ENCODE measurements at regions of chr6 and their contacts with region 1.

Region 1: GRCh38 chr6:34055223-34055933 is 90.5 kb downstream of the GRM4 start:
- DNase-seq: peak; percentile 82
- ATAC-seq: peak; percentile 57
- H3K4me3 Mint-ChIP-seq: no peak overlapping the region
- H3K27ac Mint-ChIP-seq: no peak overlapping the region
- H3K4me1 Mint-ChIP-seq: peaks cover 50% of the 10 kb centered on the region
- H3K27me3 Mint-ChIP-seq: no peaks in the 10 kb centered on the region; the same call in 1 of the 2 replicates
- CTCF ChIP-seq: peak; percentile 68

Region 2: DNA sequence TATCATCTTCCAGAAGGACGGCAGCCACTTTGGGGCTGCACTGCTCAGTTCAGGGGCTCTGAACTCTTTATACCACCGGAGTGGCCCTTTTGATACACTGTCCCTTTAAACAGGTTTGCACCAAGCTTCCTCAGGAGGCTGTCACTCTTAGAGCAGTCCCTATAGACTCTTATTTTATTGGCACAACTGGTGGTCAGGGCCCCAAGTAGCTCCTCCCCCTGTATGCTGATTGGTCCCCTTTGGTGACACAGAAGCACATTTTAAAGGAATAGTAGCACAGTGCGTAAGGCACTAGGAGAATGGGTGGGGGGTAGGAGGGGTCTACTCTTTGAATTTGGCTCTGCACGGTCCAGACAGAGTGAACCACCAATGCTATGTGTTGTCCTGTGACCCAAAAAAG is 128.9 kb before region 1 on chr6:
- CTCF ChIA-PET with region 1: interaction called, 10 read pairs
- POLR2A ChIA-PET with region 1: no interaction called
- DNase-seq: peak; percentile 47
- ATAC-seq: peak; percentile 96
- H3K4me3 Mint-ChIP-seq: no peak overlapping the region
- H3K27ac Mint-ChIP-seq: no peak overlapping the region
- H3K4me1 Mint-ChIP-seq: peaks cover 18% of the 10 kb centered on the region
- H3K27me3 Mint-ChIP-seq: peaks cover 5% of the 10 kb centered on the region; the same call in 1 of the 2 replicates
- CTCF ChIP-seq: no peak

Region 3: DNA sequence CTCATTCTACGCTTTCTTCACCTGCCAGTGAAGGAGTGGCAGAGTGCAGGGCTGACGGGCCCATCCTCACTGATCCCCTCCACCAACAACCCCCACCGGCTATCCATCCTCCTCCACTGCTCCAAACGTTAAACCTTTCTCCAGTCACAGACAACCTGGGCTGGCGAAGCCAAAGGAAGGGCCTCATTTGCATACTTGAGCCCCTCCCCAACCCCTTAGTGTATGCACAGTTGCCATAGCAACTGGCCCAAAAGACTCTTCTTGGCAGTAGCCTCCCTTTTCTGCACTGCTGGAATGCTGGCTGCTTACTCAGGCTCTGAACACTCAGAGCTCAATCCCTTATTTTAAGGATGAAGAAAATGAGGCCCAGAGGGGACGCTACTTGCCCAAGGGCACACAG is 39.8 kb before region 1 on chr6:
- CTCF ChIA-PET with region 1: interaction called, 12 read pairs
- POLR2A ChIA-PET with region 1: no interaction called
- DNase-seq: peak; percentile 46
- ATAC-seq: peak; percentile 79
- H3K4me3 Mint-ChIP-seq: no peak overlapping the region
- H3K27ac Mint-ChIP-seq: no peak overlapping the region
- H3K4me1 Mint-ChIP-seq: peaks cover 6% of the 10 kb centered on the region
- H3K27me3 Mint-ChIP-seq: peaks cover 12% of the 10 kb centered on the region
- CTCF ChIP-seq: no peak

Region 4: GRCh38 chr6:34067814-34068213 is 12.4 kb after region 1 on chr6:
- CTCF ChIA-PET with region 1: interaction called, 57 read pairs
- POLR2A ChIA-PET with region 1: no interaction called
- DNase-seq: no peak
- ATAC-seq: peak; percentile 38
- H3K4me3 Mint-ChIP-seq: no peak overlapping the region
- H3K27ac Mint-ChIP-seq: no peak overlapping the region
- H3K4me1 Mint-ChIP-seq: peaks cover 2% of the 10 kb centered on the region; the same call in 1 of the 2 replicates
- H3K27me3 Mint-ChIP-seq: no peaks in the 10 kb centered on the region
- CTCF ChIP-seq: no peak

Region 5: DNA sequence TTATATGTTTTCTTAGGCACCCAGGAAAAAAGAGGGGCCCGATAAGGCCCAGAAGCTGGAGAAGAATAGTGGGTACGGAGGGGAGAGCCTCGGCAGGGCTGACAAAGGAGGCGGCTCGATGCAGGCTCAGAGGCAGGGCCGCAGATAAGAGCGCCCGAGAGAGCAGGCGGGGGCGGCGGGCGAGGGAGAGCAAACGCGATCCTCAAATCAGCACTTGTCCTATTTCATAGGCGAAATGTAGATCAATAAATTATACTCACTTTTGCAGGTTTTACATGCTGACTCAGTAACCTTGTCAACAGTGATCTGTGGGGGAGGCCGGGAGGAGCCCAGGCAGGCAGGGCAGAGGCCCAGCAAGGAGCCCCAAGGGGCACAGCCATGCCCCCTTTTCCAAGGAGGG is 47.9 kb after region 1 on chr6:
- CTCF ChIA-PET with region 1: interaction called, 18 read pairs
- POLR2A ChIA-PET with region 1: no interaction called
- DNase-seq: no peak
- ATAC-seq: no peak
- H3K4me3 Mint-ChIP-seq: no peak overlapping the region
- H3K27ac Mint-ChIP-seq: peak overlapping the region; percentile 23; the same call in 1 of the 2 replicates
- H3K4me1 Mint-ChIP-seq: peaks cover 20% of the 10 kb centered on the region
- H3K27me3 Mint-ChIP-seq: no peaks in the 10 kb centered on the region
- CTCF ChIP-seq: no peak

Region 6: GRCh38 chr6:34145161-34146020 is 90.0 kb after region 1 on chr6:
- CTCF ChIA-PET with region 1: interaction called, 187 read pairs
- POLR2A ChIA-PET with region 1: no interaction called
- DNase-seq: peak; percentile 70
- ATAC-seq: peak; percentile 27
- H3K4me3 Mint-ChIP-seq: peak overlapping the region; percentile 76
- H3K27ac Mint-ChIP-seq: no peak overlapping the region
- H3K4me1 Mint-ChIP-seq: peaks cover 76% of the 10 kb centered on the region
- H3K27me3 Mint-ChIP-seq: peaks cover 42% of the 10 kb centered on the region
- CTCF ChIP-seq: no peak

Region 7: GRCh38 chr6:34273242-34273805 is 217.9 kb after region 1 on chr6:
- CTCF ChIA-PET with region 1: no interaction called
- POLR2A ChIA-PET with region 1: no interaction called
- DNase-seq: no peak
- ATAC-seq: no peak
- H3K4me3 Mint-ChIP-seq: no peak overlapping the region
- H3K27ac Mint-ChIP-seq: no peak overlapping the region
- H3K4me1 Mint-ChIP-seq: peaks cover 5% of the 10 kb centered on the region
- H3K27me3 Mint-ChIP-seq: no peaks in the 10 kb centered on the region
- CTCF ChIP-seq: no peak

Measured in WTC11 (cell line).